MCF 10A (cell line): ENCODE measurements at regions of chr19 and their contacts with region 1.

Region 1: GRCh38 chr19:38134540-38135149 is 89.4 kb downstream of the DPF1 start:
- DNase-seq: peak; percentile 69
- H3K4me3 Mint-ChIP-seq: peak overlapping the region; percentile 21
- H3K27ac Mint-ChIP-seq: no peak overlapping the region
- H3K4me1 Mint-ChIP-seq: peaks cover 11% of the 10 kb centered on the region
- H3K27me3 Mint-ChIP-seq: no peaks in the 10 kb centered on the region
- CTCF ChIP-seq: peak; percentile 63

Region 2: GRCh38 chr19:37899966-37900365 is 234.7 kb before region 1 on chr19:
- CTCF ChIA-PET with region 1: interaction called, 10 read pairs
- POLR2A ChIA-PET with region 1: no interaction called
- intact Hi-C with region 1: no loop called
- DNase-seq: no peak
- H3K4me3 Mint-ChIP-seq: no peak overlapping the region
- H3K27ac Mint-ChIP-seq: no peak overlapping the region
- H3K4me1 Mint-ChIP-seq: no peaks in the 10 kb centered on the region
- H3K27me3 Mint-ChIP-seq: no peaks in the 10 kb centered on the region
- CTCF ChIP-seq: no peak

Region 3: DNA sequence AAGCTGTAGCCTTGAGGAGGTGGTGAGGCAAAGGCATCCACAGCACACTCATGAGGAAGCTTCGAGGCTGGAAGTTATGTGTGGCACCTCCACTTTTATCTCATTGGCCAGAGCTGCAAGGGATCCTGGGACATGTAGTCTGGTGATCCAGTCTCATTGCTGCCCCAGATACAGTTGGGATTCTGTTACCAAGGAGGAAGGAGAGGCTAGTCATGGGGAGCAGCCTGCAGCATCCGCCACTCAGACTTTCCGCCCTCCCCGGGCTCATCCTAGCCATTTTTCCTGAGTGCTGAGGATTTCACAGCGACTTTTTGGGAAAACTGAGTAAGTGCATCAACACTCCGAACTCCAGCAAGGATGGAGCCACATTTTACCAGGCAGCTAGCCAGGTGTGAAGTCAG is 15.0 kb after region 1 on chr19:
- CTCF ChIA-PET with region 1: interaction called, 13 read pairs
- POLR2A ChIA-PET with region 1: interaction called, 4 read pairs
- intact Hi-C with region 1: no loop called
- DNase-seq: no peak
- H3K4me3 Mint-ChIP-seq: no peak overlapping the region
- H3K27ac Mint-ChIP-seq: no peak overlapping the region
- H3K4me1 Mint-ChIP-seq: peaks cover 8% of the 10 kb centered on the region
- H3K27me3 Mint-ChIP-seq: no peaks in the 10 kb centered on the region
- CTCF ChIP-seq: no peak

Region 4: GRCh38 chr19:38277969-38278680 is 143.5 kb after region 1 on chr19:
- CTCF ChIA-PET with region 1: no interaction called
- POLR2A ChIA-PET with region 1: no interaction called
- intact Hi-C with region 1: no loop called
- DNase-seq: no peak
- H3K4me3 Mint-ChIP-seq: no peak overlapping the region
- H3K27ac Mint-ChIP-seq: peak overlapping the region; percentile 27
- H3K4me1 Mint-ChIP-seq: peaks cover 11% of the 10 kb centered on the region
- H3K27me3 Mint-ChIP-seq: no peaks in the 10 kb centered on the region
- CTCF ChIP-seq: no peak